AG04449 (cell line): ENCODE measurements at regions of chr20 and their contacts with region 1.

Region 1: DNA sequence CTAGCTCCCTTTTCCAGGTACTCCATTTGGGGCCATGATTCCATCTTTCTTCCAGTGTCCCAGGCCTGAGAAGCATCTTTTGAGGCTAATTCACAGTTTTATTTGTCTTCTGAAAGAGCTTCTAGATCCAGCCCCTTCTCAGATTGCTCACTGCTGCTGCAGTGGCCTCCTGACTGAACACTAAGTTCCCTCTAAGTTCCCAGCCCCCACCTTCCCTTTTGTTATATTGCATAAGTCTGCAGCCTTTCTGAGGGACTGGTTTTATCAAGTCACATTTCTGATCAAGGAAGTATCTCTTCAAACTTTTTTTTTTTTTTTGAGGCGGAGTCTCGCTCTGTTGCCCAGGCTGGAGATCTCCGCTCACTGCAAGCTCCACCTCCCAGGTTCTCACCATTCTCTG is 10.7 kb downstream of the MAPRE1 start:
- DNase-seq: no peak
- H3K4me3 ChIP-seq: no peak overlapping the region
- CTCF ChIP-seq: no peak

Region 2: GRCh38 chr20:32240220-32240619 is 590.2 kb before region 1 on chr20:
- CTCF ChIA-PET with region 1: no interaction called
- POLR2A ChIA-PET with region 1: no interaction called
- DNase-seq: no peak
- H3K4me3 ChIP-seq: no peak overlapping the region
- CTCF ChIP-seq: no peak

Region 3: DNA sequence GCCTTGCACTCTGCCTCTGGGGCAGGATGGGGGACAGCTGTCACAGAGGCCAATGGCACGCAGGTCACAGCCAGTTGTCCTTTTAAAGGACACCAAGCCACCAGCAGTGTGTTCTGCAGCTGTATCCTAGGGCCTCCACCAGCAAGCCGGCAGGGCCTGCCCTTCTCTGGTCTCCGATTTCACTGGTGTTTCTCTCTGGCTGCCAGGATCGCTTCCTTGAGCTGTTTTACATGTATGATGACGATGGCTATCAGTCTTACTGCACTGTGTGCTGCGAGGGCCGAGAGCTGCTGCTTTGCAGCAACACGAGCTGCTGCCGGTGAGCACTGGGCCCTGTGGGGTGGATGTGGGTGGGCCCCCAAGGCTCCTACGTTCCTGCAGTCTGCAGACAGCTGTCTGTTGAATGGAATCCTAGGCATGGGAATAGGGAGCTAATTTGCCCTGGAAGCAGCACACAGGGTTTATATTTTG is 33.4 kb before region 1 on chr20:
- CTCF ChIA-PET with region 1: no interaction called
- POLR2A ChIA-PET with region 1: no interaction called
- DNase-seq: no peak
- H3K4me3 ChIP-seq: no peak overlapping the region
- CTCF ChIP-seq: no peak

Region 4: DNA sequence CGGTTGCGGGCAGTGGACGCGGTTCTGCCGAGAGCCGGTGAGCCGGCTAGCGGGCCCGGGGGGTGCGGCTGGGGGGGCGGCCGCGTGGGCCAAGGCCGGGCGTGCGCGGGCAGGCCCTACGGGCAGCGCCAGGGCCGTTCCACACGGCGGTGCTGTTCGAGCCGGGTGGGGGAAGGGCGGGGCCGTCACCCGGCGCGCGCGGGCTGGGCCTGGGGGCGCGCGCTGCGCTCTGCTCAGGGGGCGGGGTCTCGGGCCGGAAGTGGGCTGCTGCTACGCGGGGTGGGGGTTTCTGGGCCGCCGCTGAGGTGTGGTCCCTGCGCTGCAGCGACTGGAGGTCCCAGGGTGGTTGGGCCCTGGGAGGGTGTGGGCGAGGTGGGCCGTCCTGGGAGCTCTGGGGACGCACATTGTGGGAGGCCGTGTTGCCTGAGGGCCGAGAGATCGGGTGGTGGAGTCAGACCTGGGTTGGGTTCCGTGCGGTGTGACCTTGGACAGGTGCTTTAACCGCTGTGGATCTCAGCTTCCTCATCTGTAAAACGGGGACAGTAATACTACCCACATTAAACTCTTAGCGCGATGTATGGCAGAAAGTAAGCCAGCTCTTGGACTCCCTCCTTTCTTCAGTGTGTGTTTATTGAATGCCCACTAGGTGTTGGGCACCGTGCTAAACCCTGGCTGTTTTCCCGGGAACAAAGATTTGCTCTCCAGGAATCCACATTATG is 10.3 kb before region 1 on chr20:
- CTCF ChIA-PET with region 1: interaction called, 10 read pairs
- POLR2A ChIA-PET with region 1: no interaction called
- DNase-seq: no peak
- H3K4me3 ChIP-seq: peak overlapping the region; percentile 83
- CTCF ChIP-seq: no peak